ENCODE measurements at regions of chr2 and their contacts with region 1.

Region 1: GRCh38 chr2:26144953-26145680 is 27.8 kb upstream of the GAREM2 start:
- ATAC-seq: peak; percentile 53 to 84 (median 66)
- H3K4me3 ChIP-seq: no peak overlapping the region
- H3K27ac ChIP-seq: no peak overlapping the region
- H3K4me1 ChIP-seq: no peaks in the 10 kb centered on the region

Region 2: DNA sequence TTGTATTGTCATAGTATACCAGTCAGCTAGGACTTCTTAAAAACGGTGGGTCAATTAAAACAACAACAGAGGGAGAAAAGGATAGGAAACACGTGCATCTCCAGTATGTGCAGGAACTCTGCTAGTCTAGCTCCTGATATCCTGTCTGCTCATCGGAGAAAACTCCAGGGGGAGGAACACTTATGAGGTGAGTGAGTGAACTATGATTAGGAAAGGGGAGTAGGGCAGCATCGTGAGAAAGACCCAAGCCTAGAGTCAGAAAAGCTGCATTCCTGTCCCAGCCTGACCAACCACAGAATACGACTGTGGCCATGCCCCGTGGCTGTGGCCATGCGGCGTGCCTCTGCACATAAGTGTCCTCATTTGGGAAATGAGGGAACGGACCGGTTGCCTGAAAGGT is 505.9 kb before region 1 on chr2:
- in situ Hi-C with region 1: no loop called
- ATAC-seq: no peak
- H3K4me3 ChIP-seq: no peak overlapping the region
- H3K27ac ChIP-seq: no peak overlapping the region
- H3K4me1 ChIP-seq: no peaks in the 10 kb centered on the region

Region 3: GRCh38 chr2:25951071-25951547 is 194.0 kb before region 1 on chr2:
- in situ Hi-C with region 1: loop called in 3 of 9 experiments (anchors 5 to 25 kb)
- ATAC-seq: peak; percentile 95 to 100 (median 98)
- H3K4me3 ChIP-seq: no peak overlapping the region
- H3K27ac ChIP-seq: peak overlapping the region in 1 of 2 donors; percentile 67
- H3K4me1 ChIP-seq: no peaks in the 10 kb centered on the region

Region 4: DNA sequence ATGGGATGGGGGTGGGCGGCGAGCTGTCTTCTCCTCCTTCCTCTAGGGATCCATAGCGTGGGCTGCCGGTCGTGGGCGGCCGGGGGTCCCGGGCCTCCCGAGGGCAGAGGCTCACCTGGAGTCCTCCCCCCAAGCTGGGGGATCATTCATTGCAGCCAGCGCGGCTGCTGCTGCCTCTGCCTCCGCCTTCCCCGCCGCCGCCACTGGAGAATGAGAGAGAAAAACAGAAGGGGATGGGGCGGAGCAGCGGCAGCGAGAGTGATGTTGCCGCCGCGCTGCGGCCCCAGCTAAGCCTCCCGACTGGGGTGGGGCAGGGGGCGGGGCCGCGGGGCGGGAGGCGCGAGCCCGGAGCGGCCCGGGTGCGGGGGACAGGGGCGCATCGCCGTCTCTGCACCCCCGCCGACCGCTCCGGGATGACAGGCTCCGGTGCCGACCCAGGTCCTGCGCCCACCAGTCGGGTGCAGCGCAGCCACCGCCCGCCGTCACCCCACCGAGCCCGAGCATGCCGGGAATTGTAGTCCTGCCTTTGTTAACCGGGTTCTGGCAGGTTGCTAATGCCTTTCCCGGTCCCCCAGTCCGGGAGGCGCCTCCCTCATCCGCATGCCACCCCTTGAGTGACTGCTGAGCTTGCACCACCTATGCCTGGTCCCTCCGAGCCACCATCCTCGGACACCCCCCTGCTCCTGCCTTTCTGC is 162.7 kb before region 1 on chr2 and contains the start of gene KIF3C:
- in situ Hi-C with region 1: loop called in 2 of 9 experiments (anchors 10 to 25 kb)
- ATAC-seq: peak; percentile 87 to 92 (median 89)
- H3K4me3 ChIP-seq: peak within 1 kb of the TSS; percentile 54 to 88 (median 79)
- H3K27ac ChIP-seq: peak within 1 kb of the TSS; percentile 84 to 87
- H3K4me1 ChIP-seq: peaks cover 40% of the 10 kb centered on the region in 2 donors
- total RNA-seq, gene KIF3C: 1.1 to 61.7 (median 48.5) TPM

Region 5: GRCh38 chr2:25991965-25992364 is 153.2 kb before region 1 on chr2:
- in situ Hi-C with region 1: loop called in 2 of 9 experiments (anchors 10 to 25 kb)
- ATAC-seq: peak in 1 of 8 experiments; percentile 17
- H3K4me3 ChIP-seq: no peak overlapping the region
- H3K27ac ChIP-seq: no peak overlapping the region
- H3K4me1 ChIP-seq: no peaks in the 10 kb centered on the region

Region 6: DNA sequence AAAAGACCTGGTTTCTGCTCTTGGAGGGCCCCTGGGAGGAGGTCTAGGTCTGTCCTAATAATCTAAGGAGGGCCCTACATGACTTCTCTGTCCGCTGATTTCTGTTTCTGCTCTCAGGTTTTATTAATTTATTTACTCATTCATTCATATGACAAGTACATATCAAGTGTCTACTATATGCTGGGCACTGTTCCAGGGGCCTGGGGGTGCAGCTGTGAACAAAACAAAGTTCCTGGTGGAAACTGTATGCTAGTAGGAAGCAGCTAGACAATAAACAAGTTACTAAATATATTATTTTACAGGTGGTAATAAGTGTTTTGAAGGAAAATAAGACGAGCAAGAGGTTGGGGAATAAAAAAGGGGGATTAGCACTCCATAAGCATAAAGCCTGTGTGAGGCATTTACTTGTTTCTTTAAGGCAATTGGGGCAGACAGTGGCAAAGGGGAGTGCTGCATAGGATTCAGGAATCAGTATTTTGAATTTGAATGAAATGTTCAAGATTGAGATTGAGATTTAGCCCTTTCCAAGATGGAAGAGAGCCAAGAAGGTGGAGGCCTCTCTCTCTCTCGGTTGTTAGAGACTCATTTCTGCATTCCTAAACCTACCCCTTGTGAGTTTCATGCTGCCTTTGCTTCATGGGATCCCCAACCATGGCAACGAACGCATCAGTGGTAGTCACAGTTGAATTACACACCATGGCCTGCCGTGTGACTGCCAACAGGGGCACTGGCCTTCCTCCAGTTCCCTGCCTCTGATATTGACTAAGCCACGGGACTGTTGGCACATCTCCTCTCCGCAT is 284.9 kb after region 1 on chr2:
- in situ Hi-C with region 1: no loop called
- ATAC-seq: peak; percentile 28 to 99 (median 50)
- H3K4me3 ChIP-seq: no peak overlapping the region
- H3K27ac ChIP-seq: no peak overlapping the region
- H3K4me1 ChIP-seq: no peaks in the 10 kb centered on the region

Measured in motor neuron (in vitro differentiated cells).